Activated T-helper 1 cell treated with anti-CD3 and anti-CD28 coated beads, Interleukin-12 subunit alpha, Interleukin-12 subunit beta, Interleukin-2, Interleukin-4 antibody, amounts not matched to agents 30 ng/mL and 10 ng/mL and 1 ng/mL, durations not matched to agents 14 hours and 24 hours and 36 hours (primary cell): ENCODE measurements at regions of chr14 and their contacts with region 1.

Region 1: GRCh38 chr14:59507063-59507780 is 22.9 kb downstream of the JKAMP start:
- DNase-seq: peak; percentile 34
- H3K4me3 Mint-ChIP-seq: no peak overlapping the region
- H3K27ac Mint-ChIP-seq: no peak overlapping the region
- H3K4me1 Mint-ChIP-seq: peaks cover 4% of the 10 kb centered on the region
- H3K27me3 Mint-ChIP-seq: peaks cover 6% of the 10 kb centered on the region

Region 2: DNA sequence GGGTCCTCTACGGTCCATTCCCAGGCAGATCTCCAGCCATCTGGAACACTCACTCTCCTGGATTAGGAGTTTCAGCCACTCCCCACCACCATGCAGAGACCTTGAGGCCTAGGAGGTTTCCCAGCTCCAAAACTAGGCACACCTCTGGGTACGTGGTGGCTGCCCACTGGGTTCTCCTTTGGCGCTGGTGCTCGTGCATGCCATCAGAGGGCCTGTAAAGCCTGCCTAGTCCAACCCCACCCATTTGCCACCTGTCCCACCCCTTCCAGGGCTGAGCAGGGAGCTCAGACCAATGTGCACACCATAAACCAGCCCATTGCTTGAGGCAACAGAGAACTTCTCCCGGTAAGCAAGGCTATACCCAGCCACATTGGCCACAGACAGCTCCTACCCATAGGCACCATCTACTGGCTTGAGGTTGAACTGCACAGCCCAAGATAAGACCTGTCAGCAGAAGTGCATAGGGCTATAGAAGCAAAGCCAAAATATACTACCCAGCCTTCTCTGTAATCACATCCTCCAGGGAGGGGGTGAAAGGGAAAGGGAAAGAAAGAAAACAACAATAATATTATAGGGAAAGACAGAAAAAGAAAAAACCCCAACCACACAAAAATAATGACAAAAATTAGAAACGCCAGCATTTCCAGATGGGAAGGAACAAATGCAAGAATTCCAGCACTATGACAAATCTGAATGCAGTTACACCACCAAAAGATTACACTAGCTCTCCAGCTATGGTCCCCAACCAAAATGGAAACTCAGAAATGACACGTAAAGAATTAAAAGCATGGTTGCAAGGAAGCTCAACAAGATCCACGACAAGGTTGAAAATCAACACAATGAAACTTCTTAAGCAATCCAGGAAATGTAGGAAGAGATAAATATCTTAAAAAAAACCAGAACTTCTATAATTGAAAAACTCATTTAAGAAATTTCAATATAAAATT is 181.3 kb after region 1 on chr14:
- intact Hi-C with region 1: loop called (anchors 1 kb)
- DNase-seq: no peak
- H3K4me3 Mint-ChIP-seq: no peak overlapping the region
- H3K27ac Mint-ChIP-seq: no peak overlapping the region
- H3K4me1 Mint-ChIP-seq: no peaks in the 10 kb centered on the region
- H3K27me3 Mint-ChIP-seq: peaks cover 11% of the 10 kb centered on the region